Posterior vena cava (tissue), 2 donors: ENCODE measurements at regions of chr10 and their contacts with region 1.

Region 1: DNA sequence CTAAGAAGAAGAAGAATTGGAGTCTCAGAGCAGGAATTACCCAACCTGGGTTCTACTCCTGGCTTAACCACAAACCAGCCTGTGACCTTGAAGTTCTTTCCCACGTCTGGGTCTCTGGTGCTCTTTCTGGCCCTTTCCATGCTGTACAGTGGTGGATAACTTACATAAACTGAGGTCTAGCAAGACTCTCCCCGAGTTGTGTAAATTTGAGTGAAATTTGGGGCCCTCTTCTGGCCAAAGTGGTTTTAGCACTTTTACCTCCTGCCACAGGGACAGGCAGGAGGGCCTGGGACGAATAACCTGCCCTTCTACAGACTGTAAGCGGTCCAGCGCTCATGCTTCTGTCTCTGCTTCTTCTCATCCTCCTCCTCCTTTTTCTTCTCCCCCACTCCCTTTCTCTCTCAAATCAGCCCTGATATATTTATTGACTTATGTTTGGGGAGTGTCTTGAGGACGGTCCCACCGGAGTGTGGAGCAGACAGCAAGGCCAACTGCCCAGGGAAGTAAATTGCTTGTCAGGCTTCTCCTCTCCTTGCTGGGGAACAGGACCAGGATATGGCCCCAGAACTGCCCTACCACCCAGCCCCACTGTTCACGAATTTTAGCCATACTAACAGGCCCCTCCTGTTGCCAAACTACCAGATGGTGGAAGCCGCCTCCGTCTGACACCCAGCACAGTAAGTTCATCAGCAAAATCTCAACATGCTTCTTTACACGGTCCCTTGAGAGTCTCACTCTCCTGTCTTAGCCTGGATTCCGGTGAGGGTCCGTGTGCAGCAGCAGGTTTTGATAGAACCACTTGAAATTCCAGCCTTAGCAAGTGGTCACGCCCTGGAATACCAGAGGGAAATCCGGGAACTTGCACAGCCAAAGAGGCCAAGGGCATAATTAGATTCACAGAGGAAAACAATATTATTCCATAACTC is 4.0 kb upstream of the SH3PXD2A start:
- DNase-seq: peak; percentile 57

Region 2: GRCh38 chr10:103592186-103593021 is 267.0 kb before region 1 on chr10:
- intact Hi-C with region 1: loop called in 1 of 2 experiments (anchors 10 kb)
- DNase-seq: no peak

Region 3: DNA sequence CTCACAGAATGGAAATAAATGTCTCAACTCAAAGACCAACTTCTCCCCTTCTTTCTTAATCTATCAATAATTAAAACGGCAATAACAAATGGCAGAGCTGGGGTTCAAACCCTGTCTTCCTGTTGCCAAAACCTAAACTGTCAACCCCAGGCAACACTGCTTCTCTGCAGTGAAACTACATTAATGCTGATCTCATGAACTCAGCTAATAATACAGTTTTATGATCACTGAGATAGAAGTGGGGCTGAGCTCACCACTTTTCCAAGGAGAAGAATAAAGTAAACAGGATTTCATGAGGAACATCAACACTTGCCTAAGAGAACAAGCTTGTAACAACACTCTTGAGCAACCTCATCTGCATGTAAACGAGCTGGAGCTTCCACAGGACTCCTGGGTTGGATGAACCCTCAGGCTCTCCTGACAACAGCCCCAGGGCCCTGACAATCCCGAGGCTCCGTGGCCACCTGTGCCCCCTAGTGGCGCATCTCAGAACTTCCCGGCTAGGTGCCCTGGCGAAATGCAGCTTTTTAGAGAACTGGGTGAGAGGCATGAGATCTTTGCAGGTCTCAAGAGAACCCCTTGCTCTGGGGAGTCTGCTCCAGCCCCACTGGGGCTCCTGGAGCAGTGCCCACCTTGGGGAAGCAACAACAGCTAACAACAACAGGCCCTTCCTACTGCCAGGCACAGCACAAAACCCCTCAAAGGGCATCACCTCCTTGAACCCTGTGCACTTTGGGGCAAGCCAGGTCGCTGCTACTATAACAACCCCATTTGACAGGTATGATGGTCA is 173.3 kb before region 1 on chr10:
- intact Hi-C with region 1: no loop called
- DNase-seq: peak; percentile 92

Region 4: DNA sequence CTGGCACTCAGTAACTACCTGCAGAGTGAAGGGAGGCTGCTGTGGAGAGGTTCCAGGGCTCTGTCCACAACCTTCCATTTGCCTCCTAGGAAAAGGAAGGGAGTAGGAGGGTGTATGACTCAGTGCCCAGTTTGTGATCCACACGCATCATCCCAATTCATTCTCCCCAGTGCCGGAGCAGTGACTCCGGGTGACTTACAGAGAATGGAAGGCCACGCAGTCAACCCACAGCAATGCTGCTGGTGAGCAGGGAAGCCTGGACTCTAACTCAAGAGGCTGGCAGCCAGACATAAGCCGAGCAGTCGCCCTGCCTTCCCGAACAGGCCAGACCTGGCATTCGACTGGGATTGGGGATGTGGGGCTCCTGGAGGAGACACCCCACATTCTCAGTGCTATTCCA is 144.0 kb before region 1 on chr10:
- intact Hi-C with region 1: loop called (anchors 1 to 2 kb)
- DNase-seq: no peak

Region 5: DNA sequence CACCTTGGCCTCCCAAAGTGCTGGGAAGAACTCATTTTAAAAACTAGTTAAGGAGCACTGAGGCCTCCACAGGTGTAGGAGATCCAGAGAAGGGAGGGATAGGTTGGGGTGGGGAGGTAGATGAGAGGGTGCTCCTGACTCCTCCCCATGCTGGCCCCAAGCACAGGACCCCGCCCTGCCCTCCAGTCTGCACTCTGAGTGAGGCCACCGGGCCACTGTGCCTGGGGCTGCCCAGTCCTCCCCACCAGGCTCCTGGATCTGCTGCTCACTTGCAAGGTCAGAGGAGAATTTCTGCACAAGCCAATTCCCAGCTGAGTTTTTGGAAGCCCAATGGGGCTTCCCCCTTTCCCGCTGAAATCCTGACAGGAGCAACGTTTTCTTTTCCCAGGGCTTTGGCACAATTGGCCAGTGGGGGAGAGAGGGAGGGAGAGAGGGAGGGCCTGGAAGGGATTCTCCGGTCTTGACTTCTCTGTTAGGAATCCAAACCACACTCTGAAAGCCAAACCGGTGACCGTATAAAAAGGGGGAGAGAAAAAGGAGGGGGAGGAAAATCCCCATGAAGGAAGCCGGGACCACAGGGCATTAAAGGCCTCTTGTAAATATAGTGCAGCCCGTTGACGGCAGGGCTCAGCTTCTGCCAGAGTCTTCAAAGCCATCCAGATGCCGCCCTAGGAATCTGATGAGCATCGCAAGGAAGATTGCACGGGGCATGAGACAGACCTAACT is 120.2 kb before region 1 on chr10:
- intact Hi-C with region 1: no loop called
- DNase-seq: no peak

Region 6: DNA sequence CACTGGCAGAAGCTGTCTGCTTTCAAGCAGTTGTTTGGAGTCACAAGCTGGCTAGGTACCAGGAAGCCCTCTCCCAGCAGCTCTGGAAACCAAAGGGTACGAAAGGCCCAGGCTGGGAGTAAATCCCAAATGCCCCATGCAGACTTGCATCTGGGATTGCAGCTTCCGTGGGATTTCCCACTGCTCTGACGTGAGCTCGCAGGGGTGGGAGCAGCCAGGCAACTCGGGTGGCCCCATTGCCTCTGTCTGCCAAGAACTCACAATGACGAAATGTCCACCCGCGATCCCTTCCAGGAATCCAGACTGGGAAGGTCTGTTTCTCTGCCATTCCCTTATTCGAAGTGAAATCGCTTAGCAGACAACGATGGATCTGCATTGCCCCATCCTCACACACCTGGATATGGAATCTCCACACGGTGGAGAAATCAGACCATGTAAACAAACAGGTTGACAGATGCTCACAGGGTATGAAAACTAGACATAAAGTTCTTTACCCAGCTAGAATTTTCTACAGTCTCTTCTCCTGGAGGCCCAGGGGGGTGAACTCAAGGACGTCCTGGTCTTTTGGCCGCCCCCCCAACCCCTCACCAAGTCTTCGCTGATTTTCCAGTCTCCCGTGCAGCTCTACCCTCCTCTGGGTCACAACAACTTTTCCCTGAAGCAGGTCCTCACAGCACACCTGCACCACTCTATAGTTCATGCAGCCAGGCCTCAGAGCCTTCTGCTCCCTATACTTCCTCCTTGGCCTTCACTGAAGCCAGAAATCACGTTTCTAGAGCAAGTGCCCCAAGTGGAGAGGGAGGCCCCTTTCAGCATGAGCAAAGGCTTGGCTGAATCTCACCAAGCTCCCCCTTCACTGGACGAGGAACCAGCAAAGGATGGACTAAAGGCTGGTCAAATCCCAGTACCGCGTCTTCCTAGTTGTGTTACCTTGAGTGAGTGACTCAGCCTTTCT is 24.1 kb before region 1 on chr10:
- intact Hi-C with region 1: loop called in 1 of 2 experiments (anchors 1 kb)
- DNase-seq: peak; percentile 92

Region 7: GRCh38 chr10:105559333-105560097 is 1700.1 kb after region 1 on chr10:
- intact Hi-C with region 1: no loop called
- DNase-seq: no peak